Naive thymus-derived CD4-positive, alpha-beta T cell (primary cell): ENCODE measurements at regions of chr1 and their contacts with region 1.

Region 1: GRCh38 chr1:66436378-66437145 is 97.4 kb upstream of the SGIP1 start:
- DNase-seq: peak in 7 of 9 donors; percentile 12 to 52 (median 32)
- ATAC-seq: peak; percentile 79
- H3K4me3 ChIP-seq: no peak overlapping the region
- H3K4me3 Mint-ChIP-seq: no peak overlapping the region
- H3K27ac ChIP-seq: no peak overlapping the region
- H3K27ac Mint-ChIP-seq: peak overlapping the region in 4 of 9 donors; percentile 3 to 30 (median 8)
- H3K4me1 ChIP-seq: peaks cover 3 to 4% of the 10 kb centered on the region in 2 donors
- H3K4me1 Mint-ChIP-seq: peaks cover 6 to 36% (median 14%) of the 10 kb centered on the region in 7 donors
- H3K27me3 ChIP-seq: no peaks in the 10 kb centered on the region
- H3K27me3 Mint-ChIP-seq: no peaks in the 10 kb centered on the region

Region 2: GRCh38 chr1:66325594-66326380 is 110.8 kb before region 1 on chr1:
- CTCF ChIA-PET with region 1: no interaction called
- POLR2A ChIA-PET with region 1: no interaction called
- intact Hi-C with region 1: no loop called
- DNase-seq: no peak
- ATAC-seq: no peak
- H3K4me3 ChIP-seq: no peak overlapping the region
- H3K4me3 Mint-ChIP-seq: no peak overlapping the region
- H3K27ac ChIP-seq: no peak overlapping the region
- H3K27ac Mint-ChIP-seq: peak overlapping the region in 3 of 9 donors; percentile 7 to 69 (median 11)
- H3K4me1 ChIP-seq: peaks cover 26 to 32% of the 10 kb centered on the region in 2 donors
- H3K4me1 Mint-ChIP-seq: peaks cover 23 to 69% (median 61%) of the 10 kb centered on the region in 7 donors
- H3K27me3 ChIP-seq: no peaks in the 10 kb centered on the region
- H3K27me3 Mint-ChIP-seq: no peaks in the 10 kb centered on the region

Region 3: DNA sequence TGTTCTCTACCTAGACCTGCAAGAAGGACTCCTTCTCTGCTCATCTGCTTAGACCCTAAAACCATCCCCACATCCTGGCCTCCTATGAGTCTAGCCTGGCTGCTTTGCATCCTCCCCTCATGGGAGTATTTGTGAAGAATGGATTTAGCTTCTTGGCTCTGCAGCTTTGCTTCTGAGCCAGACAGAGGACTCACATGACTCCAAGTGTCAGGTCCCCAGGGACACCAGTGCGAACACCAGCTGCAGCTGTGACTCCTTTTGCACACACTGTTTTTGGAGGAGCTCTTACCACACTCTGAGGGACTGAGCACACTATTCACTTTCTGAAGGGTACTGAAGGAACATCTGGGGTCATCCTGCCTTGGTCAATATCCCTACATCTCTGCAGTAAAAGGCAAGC is 34.4 kb before region 1 on chr1:
- CTCF ChIA-PET with region 1: no interaction called
- POLR2A ChIA-PET with region 1: no interaction called
- intact Hi-C with region 1: loop called (anchors 2 to 5 kb)
- DNase-seq: no peak
- ATAC-seq: no peak
- H3K4me3 ChIP-seq: no peak overlapping the region
- H3K4me3 Mint-ChIP-seq: no peak overlapping the region
- H3K27ac ChIP-seq: no peak overlapping the region
- H3K27ac Mint-ChIP-seq: peak overlapping the region in 1 of 9 donors; percentile 14
- H3K4me1 ChIP-seq: no peaks in the 10 kb centered on the region
- H3K4me1 Mint-ChIP-seq: peaks cover 3 to 38% (median 10%) of the 10 kb centered on the region in 7 donors
- H3K27me3 ChIP-seq: no peaks in the 10 kb centered on the region
- H3K27me3 Mint-ChIP-seq: no peaks in the 10 kb centered on the region

Region 4: DNA sequence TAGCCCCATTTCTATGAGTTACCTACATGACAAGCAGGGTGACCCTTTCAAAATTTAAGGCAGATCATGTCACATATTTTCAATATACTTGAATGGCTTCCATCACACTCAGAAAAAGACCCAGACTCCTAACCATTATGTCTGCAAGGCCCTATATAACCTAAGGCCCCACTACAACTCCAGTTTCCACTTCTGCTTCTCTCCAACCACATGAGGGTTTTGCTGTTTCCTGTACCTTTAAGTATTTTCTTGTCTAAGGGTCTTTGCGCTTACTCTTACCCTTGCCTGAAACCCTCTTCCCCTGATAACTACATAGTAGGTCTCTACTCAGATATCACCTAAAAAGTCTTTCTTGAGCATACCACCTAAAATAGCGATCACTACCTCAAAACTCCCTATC is 143.5 kb after region 1 on chr1:
- CTCF ChIA-PET with region 1: no interaction called
- POLR2A ChIA-PET with region 1: no interaction called
- intact Hi-C with region 1: no loop called
- DNase-seq: no peak
- ATAC-seq: no peak
- H3K4me3 ChIP-seq: no peak overlapping the region
- H3K4me3 Mint-ChIP-seq: no peak overlapping the region
- H3K27ac ChIP-seq: no peak overlapping the region
- H3K27ac Mint-ChIP-seq: peak overlapping the region in 1 of 9 donors; percentile 23
- H3K4me1 ChIP-seq: no peaks in the 10 kb centered on the region
- H3K4me1 Mint-ChIP-seq: no peaks in the 10 kb centered on the region
- H3K27me3 ChIP-seq: no peaks in the 10 kb centered on the region
- H3K27me3 Mint-ChIP-seq: peaks cover 13 to 28% (median 25%) of the 10 kb centered on the region in 5 donors

Region 5: DNA sequence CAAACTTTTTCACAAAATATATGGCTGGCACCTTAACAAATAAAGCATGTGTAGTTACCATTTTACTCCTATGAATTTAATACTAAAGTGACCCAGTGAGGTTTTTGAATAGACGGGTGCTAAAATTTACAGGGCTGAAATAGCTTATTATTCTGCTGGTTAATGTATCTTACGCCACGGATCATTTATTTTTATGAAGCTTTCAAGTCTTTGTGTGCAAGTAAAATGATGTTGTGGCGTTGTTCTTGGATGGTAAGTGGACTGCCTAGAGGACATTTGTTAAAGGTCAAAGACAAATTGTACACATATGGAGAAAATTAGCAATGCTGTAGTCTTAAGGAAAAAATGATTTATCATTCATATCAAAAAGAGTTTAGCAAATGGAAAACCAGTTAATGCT is 341.7 kb after region 1 on chr1:
- CTCF ChIA-PET with region 1: no interaction called
- POLR2A ChIA-PET with region 1: no interaction called
- intact Hi-C with region 1: no loop called
- DNase-seq: no peak
- ATAC-seq: no peak
- H3K4me3 ChIP-seq: no peak overlapping the region
- H3K4me3 Mint-ChIP-seq: no peak overlapping the region
- H3K27ac ChIP-seq: no peak overlapping the region
- H3K27ac Mint-ChIP-seq: no peak overlapping the region
- H3K4me1 ChIP-seq: no peaks in the 10 kb centered on the region
- H3K4me1 Mint-ChIP-seq: no peaks in the 10 kb centered on the region
- H3K27me3 ChIP-seq: no peaks in the 10 kb centered on the region
- H3K27me3 Mint-ChIP-seq: peaks cover 0 to 6% (median 0%) of the 10 kb centered on the region in 5 donors